ENCODE measurements at regions of chrX and their contacts with region 1.

Region 1: DNA sequence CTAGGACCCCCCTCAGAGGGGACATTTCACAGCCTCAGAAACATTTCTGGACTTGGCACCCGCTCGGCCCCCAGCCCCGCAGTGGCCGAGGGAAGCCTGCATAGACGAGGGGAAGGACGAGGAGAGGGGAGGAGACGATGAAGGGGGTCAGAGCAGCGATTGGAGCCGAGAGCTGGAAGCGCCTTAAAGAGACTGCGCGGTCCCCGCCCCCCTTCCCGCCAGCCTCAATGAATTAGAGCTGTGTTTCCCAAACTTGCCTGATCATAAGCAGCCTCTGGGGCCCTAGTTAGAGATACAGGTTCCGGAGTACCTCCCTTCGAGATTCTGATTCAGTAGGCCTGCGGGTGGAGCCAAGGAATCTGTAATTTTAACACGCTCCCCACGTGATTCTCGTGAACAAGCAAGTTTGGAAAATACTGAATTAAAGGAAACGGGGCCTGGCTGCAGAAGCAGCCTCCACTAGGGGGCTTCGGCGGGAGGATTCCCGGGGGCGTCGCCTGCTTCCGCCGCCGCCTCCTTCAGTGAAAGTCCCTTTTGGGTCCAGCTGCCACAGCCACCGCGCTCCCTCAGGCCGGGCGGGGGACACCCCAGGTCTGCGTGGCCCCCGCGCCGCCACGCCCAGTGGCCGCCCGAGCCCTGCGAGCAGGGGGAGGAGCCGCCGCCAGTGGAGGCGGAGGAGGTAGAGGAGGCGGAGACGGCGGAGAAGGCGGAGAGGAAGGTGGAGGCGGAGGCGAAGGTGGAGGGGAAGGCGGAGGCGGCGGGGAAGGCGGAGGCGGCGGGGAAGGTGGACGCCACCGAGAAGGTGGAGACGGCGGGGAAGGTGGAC is at the start of gene USP27X:
- DNase-seq: peak; percentile 77
- H3K4me3 Mint-ChIP-seq: peak within 1 kb of the TSS; percentile 74
- H3K27ac Mint-ChIP-seq: peak within 1 kb of the TSS; percentile 76
- H3K4me1 Mint-ChIP-seq: peaks cover 32% of the 10 kb centered on the region
- H3K27me3 Mint-ChIP-seq: no peaks in the 10 kb centered on the region
- total RNA-seq, gene USP27X: 1.7 to 1.9 TPM

Region 2: GRCh38 chrX:48937054-48937907 is 941.8 kb before region 1 on chrX:
- CTCF ChIA-PET with region 1: no interaction called
- intact Hi-C with region 1: loop called (anchors 5 kb)
- DNase-seq: peak; percentile 95
- H3K4me3 Mint-ChIP-seq: peak overlapping the region; percentile 75
- H3K27ac Mint-ChIP-seq: peak overlapping the region; percentile 100
- H3K4me1 Mint-ChIP-seq: peaks cover 81% of the 10 kb centered on the region
- H3K27me3 Mint-ChIP-seq: no peaks in the 10 kb centered on the region

Region 3: DNA sequence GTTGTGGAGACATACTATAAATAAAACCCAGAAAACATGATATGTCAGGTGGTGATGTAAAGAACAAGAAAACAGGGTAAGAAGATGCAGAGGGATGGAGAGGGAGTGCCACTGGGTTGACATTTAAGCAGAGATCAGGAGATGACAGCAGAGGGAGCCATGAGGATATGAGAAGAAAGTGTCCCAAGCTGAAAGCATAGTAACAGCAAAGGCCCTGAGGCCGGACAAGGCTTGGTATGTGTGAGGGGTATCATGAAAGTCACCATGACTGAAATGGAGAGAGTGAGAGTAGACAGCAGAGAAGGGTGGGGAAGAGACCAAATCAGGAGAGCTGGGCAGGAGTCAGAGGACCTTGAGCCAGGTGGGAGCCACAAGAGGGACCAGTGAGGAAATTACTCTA is 758.9 kb before region 1 on chrX:
- CTCF ChIA-PET with region 1: no interaction called
- intact Hi-C with region 1: loop called (anchors 5 kb)
- DNase-seq: no peak
- H3K4me3 Mint-ChIP-seq: no peak overlapping the region
- H3K27ac Mint-ChIP-seq: no peak overlapping the region
- H3K4me1 Mint-ChIP-seq: peaks cover 35% of the 10 kb centered on the region
- H3K27me3 Mint-ChIP-seq: no peaks in the 10 kb centered on the region

Region 4: DNA sequence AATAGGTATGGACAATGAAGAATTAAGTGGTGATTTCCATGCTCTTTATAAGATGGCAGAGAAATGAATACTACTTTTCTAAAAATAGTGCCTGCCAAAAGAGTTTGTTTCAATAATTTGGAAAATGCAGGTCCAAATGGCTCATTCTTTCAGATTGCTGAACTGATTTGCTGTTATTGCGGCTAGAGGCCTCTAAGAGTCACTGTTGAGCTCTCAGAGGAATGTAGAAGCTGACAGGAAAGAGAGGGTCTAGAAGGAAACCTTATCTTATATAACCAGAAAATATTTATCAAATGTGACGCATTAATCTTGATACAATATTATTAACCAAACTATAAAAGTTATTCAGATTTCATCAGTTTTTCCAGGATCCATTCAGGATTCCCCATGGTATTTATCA is 117.6 kb before region 1 on chrX:
- CTCF ChIA-PET with region 1: interaction called, 3 read pairs
- intact Hi-C with region 1: loop called (anchors 1 kb)
- DNase-seq: peak; percentile 10
- H3K4me3 Mint-ChIP-seq: no peak overlapping the region
- H3K27ac Mint-ChIP-seq: no peak overlapping the region
- H3K4me1 Mint-ChIP-seq: no peaks in the 10 kb centered on the region
- H3K27me3 Mint-ChIP-seq: no peaks in the 10 kb centered on the region

Region 5: GRCh38 chrX:49922291-49923241 is 43.5 kb after region 1 on chrX and contains the start of gene CLCN5:
- CTCF ChIA-PET with region 1: interaction called, 23 read pairs
- intact Hi-C with region 1: loop called (anchors 1 kb)
- DNase-seq: peak; percentile 95
- H3K4me3 Mint-ChIP-seq: peak within 1 kb of the TSS; percentile 73
- H3K27ac Mint-ChIP-seq: peak within 1 kb of the TSS; percentile 76
- H3K4me1 Mint-ChIP-seq: peaks cover 7% of the 10 kb centered on the region
- H3K27me3 Mint-ChIP-seq: no peaks in the 10 kb centered on the region
- total RNA-seq, gene CLCN5: 2.6 to 3.6 TPM

Region 6: DNA sequence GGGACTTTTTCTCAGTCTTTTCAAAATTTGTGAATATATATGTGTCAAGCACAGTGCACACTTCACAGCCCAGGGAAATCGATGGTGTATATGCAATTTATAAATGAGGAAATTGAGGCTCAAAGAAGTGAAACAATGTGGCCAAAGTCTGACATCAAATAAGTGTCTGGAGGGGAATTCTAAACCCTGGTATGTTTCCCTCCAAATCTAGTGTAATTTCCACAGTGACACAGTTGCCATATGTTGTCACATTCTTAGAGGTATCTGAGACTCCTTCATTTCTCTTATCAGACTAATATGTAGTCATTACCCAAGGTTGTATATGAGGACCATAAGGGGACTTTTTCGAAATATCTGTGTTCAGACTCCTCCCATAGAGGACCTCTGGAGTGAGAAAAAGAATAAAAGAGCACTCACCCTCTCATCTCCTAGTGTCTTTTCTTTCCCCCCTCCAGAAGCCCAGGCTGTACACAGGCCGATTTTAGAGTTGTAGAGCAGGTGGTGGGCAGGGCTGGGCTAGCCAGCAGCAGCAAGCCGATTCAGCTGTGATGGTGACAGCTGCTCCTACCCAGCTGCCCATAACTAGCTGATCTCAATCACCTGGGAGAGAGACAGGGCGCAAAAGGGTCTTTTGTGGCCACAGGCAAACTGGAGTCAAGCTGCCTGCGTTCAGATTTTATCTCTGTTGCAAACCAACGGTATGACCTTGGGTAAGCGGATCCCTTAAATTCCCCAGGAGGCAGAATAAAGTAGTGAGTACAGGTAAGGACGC is 98.5 kb after region 1 on chrX:
- CTCF ChIA-PET with region 1: no interaction called
- intact Hi-C with region 1: no loop called
- DNase-seq: no peak
- H3K4me3 Mint-ChIP-seq: no peak overlapping the region
- H3K27ac Mint-ChIP-seq: no peak overlapping the region
- H3K4me1 Mint-ChIP-seq: no peaks in the 10 kb centered on the region
- H3K27me3 Mint-ChIP-seq: no peaks in the 10 kb centered on the region

Region 7: GRCh38 chrX:50168241-50168687 is 289.2 kb after region 1 on chrX:
- CTCF ChIA-PET with region 1: no interaction called
- intact Hi-C with region 1: no loop called
- DNase-seq: no peak
- H3K4me3 Mint-ChIP-seq: no peak overlapping the region
- H3K27ac Mint-ChIP-seq: no peak overlapping the region
- H3K4me1 Mint-ChIP-seq: peaks cover 10% of the 10 kb centered on the region
- H3K27me3 Mint-ChIP-seq: no peaks in the 10 kb centered on the region

Measured in activated naive CD4-positive, alpha-beta T cell treated with anti-CD3 and anti-CD28 coated beads for 36 hours (primary cell).